Activated CD4-positive, alpha-beta T cell treated with anti-CD3 and anti-CD28 coated beads for 36 hours (primary cell): ENCODE measurements at regions of chr9 and their contacts with region 1.

Region 1: DNA sequence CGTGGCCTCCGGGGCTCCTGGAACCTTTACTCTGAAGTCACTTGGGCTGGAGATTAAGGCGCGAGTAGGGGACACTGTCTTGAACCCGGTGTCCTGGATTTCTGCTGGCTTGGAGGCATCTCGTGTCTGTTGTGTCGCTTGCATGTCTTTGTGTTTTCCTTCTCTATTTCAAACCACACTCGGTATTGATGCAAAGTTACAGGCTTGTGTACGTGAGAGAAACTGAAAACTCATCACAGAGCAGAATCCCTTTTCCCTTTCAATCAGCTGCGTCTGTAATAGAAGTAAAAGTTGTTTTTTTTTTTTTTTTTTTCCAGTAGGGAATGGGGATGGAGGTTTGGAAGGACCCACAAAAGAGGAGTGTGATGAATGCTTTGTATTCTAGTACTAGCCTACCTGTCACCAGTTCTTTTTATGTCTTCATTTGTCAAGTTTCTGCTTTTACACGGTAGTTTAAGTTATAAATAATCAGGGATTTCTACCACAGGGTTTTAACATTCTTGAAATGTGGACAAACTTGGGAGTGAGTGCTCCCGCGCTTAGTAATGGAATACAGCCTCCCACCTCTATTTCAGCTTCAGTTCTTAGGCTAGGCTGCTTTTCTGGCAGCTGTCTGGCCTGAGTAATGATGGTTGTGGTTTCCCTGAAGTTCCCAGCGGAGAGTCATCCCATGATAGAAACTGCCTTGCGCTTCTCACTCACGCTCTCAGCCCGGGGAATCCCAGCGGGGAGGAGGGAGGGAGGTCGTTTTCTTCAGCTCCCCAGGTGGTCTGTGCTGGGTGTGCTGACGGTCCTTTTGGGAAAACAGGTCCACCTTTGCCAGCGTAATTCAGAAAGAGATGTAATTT is 763 bp downstream of the TJP2 start:
- DNase-seq: peak; percentile 79
- ATAC-seq: peak; percentile 81
- H3K4me3 Mint-ChIP-seq: peak overlapping the region; percentile 74
- H3K27ac Mint-ChIP-seq: peak overlapping the region; percentile 83
- H3K4me1 Mint-ChIP-seq: peaks cover 48% of the 10 kb centered on the region
- H3K27me3 Mint-ChIP-seq: peaks cover 36% of the 10 kb centered on the region

Region 2: GRCh38 chr9:68653141-68653595 is 521.7 kb before region 1 on chr9:
- CTCF ChIA-PET with region 1: no interaction called
- POLR2A ChIA-PET with region 1: no interaction called
- intact Hi-C with region 1: loop called in 1 of 2 experiments (anchors 2 kb)
- DNase-seq: peak; percentile 67
- ATAC-seq: peak; percentile 73
- H3K4me3 Mint-ChIP-seq: no peak overlapping the region
- H3K27ac Mint-ChIP-seq: peak overlapping the region; percentile 72
- H3K4me1 Mint-ChIP-seq: peaks cover 35% of the 10 kb centered on the region
- H3K27me3 Mint-ChIP-seq: peaks cover 22% of the 10 kb centered on the region

Region 3: DNA sequence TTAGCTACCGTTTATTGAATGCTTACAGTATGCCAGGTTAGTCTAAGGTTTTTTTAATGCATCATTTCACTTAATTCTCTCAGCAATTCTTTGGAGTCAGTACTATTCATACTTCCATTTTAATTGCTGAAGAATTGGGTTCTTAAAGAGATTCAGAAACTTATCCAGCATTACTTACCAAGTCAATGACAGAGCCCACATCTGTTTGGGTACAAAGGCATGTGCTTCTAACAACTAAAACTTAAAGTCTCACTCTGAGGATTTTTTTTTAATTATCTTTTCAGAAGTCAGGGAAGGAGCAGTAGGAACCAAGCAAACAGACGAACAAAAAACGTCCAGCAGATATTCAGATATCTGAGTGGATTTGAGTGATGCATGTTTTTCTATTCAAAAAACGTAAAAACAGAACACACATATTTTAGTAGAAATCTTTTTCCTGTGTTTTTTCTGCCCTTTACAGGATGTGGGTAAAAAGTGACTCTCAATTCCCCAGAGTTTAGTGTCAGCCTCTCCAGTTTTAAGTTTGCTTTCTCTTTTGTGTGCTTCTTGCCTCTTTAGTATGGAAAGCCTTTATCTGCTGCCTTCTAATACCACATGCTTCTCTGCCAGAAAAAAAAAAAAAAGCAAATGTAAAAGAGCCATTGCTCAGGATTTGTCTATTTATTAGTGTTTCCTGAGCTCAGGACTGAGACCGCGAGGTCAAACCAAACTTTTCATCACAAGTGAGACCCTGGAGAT is 278.9 kb before region 1 on chr9:
- CTCF ChIA-PET with region 1: no interaction called
- POLR2A ChIA-PET with region 1: no interaction called
- intact Hi-C with region 1: loop called in 1 of 2 experiments (anchors 5 kb)
- DNase-seq: no peak
- ATAC-seq: peak; percentile 93
- H3K4me3 Mint-ChIP-seq: peak overlapping the region; percentile 59
- H3K27ac Mint-ChIP-seq: peak overlapping the region; percentile 92
- H3K4me1 Mint-ChIP-seq: peaks cover 40% of the 10 kb centered on the region
- H3K27me3 Mint-ChIP-seq: no peaks in the 10 kb centered on the region

Region 4: DNA sequence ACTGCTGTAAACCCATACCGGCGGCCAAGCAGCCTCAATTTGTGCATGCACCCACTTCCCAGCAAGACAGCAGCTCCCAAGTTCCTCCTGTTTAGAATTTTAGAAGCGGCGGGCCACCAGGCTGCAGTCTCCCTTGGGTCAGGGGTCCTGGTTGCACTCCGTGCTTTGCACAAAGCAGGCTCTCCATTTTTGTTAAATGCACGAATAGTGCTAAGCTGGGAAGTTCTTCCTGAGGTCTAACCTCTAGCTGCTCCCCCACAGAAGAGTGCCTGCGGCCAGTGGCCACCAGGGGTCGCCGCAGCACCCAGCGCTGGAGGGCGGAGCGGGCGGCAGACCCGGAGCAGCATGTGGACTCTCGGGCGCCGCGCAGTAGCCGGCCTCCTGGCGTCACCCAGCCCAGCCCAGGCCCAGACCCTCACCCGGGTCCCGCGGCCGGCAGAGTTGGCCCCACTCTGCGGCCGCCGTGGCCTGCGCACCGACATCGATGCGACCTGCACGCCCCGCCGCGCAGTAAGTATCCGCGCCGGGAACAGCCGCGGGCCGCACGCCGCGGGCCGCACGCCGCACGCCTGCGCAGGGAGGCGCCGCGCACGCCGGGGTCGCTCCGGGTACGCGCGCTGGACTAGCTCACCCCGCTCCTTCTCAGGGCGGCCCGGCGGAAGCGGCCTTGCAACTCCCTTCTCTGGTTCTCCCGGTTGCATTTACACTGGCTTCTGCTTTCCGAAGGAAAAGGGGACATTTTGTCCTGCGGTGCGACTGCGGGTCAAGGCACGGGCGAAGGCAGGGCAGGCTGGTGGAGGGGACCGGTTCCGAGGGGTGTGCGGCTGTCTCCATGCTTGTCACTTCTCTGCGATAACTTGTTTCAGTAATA is 139.2 kb before region 1 on chr9 and contains the start of gene FXN:
- CTCF ChIA-PET with region 1: no interaction called
- POLR2A ChIA-PET with region 1: no interaction called
- intact Hi-C with region 1: loop called (anchors 5 kb)
- DNase-seq: peak; percentile 91
- ATAC-seq: peak; percentile 94
- H3K4me3 Mint-ChIP-seq: peak within 1 kb of the TSS; percentile 89
- H3K27ac Mint-ChIP-seq: peak within 1 kb of the TSS; percentile 91
- H3K4me1 Mint-ChIP-seq: peaks cover 20% of the 10 kb centered on the region
- H3K27me3 Mint-ChIP-seq: no peaks in the 10 kb centered on the region
- total RNA-seq, gene FXN: 23.2 to 24.2 TPM

Region 5: GRCh38 chr9:69759421-69760277 is 584.8 kb after region 1 on chr9 and contains the start of gene PTAR1:
- CTCF ChIA-PET with region 1: no interaction called
- POLR2A ChIA-PET with region 1: no interaction called
- intact Hi-C with region 1: loop called in 1 of 2 experiments (anchors 5 kb)
- DNase-seq: peak; percentile 95
- ATAC-seq: peak; percentile 87
- H3K4me3 Mint-ChIP-seq: peak within 1 kb of the TSS; percentile 94
- H3K27ac Mint-ChIP-seq: peak within 1 kb of the TSS; percentile 94
- H3K4me1 Mint-ChIP-seq: peaks cover 27% of the 10 kb centered on the region
- H3K27me3 Mint-ChIP-seq: no peaks in the 10 kb centered on the region
- total RNA-seq, gene PTAR1: 35.2 to 37.1 TPM

Region 6: GRCh38 chr9:70519912-70520724 is 1345.3 kb after region 1 on chr9:
- CTCF ChIA-PET with region 1: no interaction called
- POLR2A ChIA-PET with region 1: no interaction called
- intact Hi-C with region 1: loop called in 1 of 2 experiments (anchors 10 kb)
- DNase-seq: peak; percentile 34
- ATAC-seq: peak; percentile 94
- H3K4me3 Mint-ChIP-seq: peak overlapping the region; percentile 44
- H3K27ac Mint-ChIP-seq: peak overlapping the region; percentile 69
- H3K4me1 Mint-ChIP-seq: peaks cover 20% of the 10 kb centered on the region
- H3K27me3 Mint-ChIP-seq: no peaks in the 10 kb centered on the region